Gastrocnemius medialis (tissue), 4 donors: ENCODE measurements at regions of chr4 and their contacts with region 1.

Region 1: GRCh38 chr4:139015269-139015947 is at the start of gene NOCT:
- DNase-seq: peak; percentile 82 to 90
- ATAC-seq: peak; percentile 90 to 92
- H3K4me3 ChIP-seq: peak within 1 kb of the TSS; percentile 61 to 83 (median 70)
- H3K27ac ChIP-seq: peak within 1 kb of the TSS; percentile 87 to 95 (median 93)
- H3K4me1 ChIP-seq: peaks cover 34 to 39% of the 10 kb centered on the region in 2 donors
- H3K27me3 ChIP-seq: no peaks in the 10 kb centered on the region
- CTCF ChIP-seq: peak in 2 of 5 experiments; percentile 40 to 53
- POLR2A ChIP-seq: peak; percentile 87 to 97
- total RNA-seq, gene NOCT: 4.8 to 18.5 (median 9.2) TPM

Region 2: GRCh38 chr4:138897811-138898226 is 117.6 kb before region 1 on chr4:
- in situ Hi-C with region 1: no loop called
- intact Hi-C with region 1: loop called (anchors 10 kb)
- DNase-seq: peak in 1 of 2 donors; percentile 5
- ATAC-seq: peak; percentile 97 to 99
- H3K4me3 ChIP-seq: peak overlapping the region in 2 of 4 donors; percentile 3 to 21
- H3K27ac ChIP-seq: peak overlapping the region; percentile 69 to 85 (median 76)
- H3K4me1 ChIP-seq: peaks cover 12 to 19% of the 10 kb centered on the region in 2 donors
- H3K27me3 ChIP-seq: no peaks in the 10 kb centered on the region
- CTCF ChIP-seq: no peak
- POLR2A ChIP-seq: no peak

Region 3: GRCh38 chr4:138981930-138982390 is 33.4 kb before region 1 on chr4:
- in situ Hi-C with region 1: no loop called
- intact Hi-C with region 1: loop called (anchors 2 kb)
- DNase-seq: peak; percentile 31 to 44
- ATAC-seq: peak; percentile 95 to 96
- H3K4me3 ChIP-seq: no peak overlapping the region
- H3K27ac ChIP-seq: peak overlapping the region; percentile 46 to 65 (median 64)
- H3K4me1 ChIP-seq: peaks cover 3 to 7% of the 10 kb centered on the region in 2 donors
- H3K27me3 ChIP-seq: no peaks in the 10 kb centered on the region
- CTCF ChIP-seq: peak in 2 of 5 experiments; percentile 19 to 28
- POLR2A ChIP-seq: no peak

Region 4: DNA sequence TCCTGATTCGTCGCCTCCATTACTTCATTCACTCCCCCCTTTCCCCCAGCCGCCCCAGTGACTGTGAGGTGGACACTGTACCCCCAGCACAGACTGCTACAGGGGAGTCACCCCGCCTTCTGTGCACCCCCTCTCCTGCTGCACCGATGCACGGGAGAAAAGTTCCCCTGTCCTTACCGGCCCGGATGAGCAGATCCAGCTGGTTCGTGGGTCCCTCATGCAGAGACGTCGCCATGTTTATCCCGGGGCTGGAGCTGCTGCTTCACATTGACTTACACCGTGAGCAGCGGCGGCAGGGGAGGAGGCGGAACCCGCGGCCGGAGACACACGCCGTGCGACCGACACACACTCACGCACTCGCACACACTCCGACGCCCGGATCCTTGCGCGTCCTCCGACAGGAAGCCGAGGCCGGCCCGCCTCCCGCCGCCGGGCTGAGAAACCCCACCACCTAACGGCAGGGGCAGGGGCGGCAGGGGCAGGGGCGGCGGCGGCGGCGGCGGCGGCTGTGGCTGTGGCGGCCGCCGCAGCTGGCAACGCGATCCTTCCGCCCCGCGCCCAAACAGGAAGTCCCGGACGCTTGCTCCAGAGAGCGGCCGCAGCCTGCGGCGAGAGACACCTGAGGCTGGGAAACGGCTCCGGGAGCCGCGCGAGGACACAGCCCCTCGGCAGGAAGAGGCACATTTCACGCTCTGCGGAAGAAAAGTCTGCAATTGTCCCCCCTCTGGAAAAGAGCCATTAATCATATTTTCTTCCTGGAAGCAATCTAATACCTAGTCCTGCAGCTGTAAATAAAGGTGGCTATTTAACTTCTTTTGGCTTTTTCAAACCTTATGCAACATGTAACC is 68.8 kb after region 1 on chr4:
- in situ Hi-C with region 1: no loop called
- intact Hi-C with region 1: loop called (anchors 1 kb)
- DNase-seq: peak; percentile 81 to 91
- ATAC-seq: peak; percentile 66 to 69
- H3K4me3 ChIP-seq: peak overlapping the region; percentile 65 to 90 (median 70)
- H3K27ac ChIP-seq: peak overlapping the region; percentile 92 to 98 (median 92)
- H3K4me1 ChIP-seq: peaks cover 38 to 41% of the 10 kb centered on the region in 2 donors
- H3K27me3 ChIP-seq: no peaks in the 10 kb centered on the region
- CTCF ChIP-seq: peak in 4 of 5 experiments; percentile 23 to 56 (median 48)
- POLR2A ChIP-seq: peak; percentile 37 to 58

Region 5: DNA sequence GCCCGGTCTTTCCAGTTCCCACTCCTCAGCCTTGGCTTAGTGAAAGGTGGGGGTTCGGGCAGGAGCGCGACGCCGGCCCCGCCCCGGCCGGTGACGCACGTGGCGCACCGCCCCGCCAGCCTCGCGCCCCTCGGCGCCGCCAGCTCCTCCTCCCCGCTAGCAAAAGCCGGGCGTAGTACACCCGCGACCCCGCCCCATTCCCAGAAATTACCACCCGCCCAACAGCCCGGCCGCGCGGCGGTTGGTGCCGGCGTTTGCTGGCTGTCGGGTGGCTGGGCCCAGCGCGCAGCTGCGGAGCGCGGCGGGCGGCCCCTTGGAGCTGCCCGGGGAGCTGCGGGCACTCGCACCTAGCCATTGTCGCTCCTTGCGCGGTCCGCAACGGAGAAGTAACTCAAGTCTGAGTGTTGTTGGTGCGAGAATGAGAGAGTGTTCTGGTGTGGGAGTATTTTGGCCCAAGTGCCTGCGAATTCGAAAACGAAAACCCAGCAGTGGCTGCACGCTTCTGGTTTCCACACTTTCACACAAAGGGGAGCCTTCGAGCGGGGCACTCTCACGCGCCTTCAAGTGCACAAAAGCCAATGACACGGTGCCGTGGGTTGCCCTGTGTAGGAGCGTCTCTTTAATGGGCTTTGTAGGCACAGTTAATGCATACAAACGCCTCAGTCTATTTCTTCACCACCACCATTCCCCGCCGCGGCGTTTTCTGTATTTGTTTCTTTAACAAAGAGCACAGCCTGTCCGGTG is 162.6 kb after region 1 on chr4:
- in situ Hi-C with region 1: no loop called
- intact Hi-C with region 1: loop called (anchors 1 kb)
- DNase-seq: peak; percentile 93 to 95
- ATAC-seq: peak; percentile 70 to 71
- H3K4me3 ChIP-seq: peak overlapping the region; percentile 81 to 96 (median 88)
- H3K27ac ChIP-seq: peak overlapping the region; percentile 98 to 100 (median 100)
- H3K4me1 ChIP-seq: peaks cover 13 to 28% of the 10 kb centered on the region in 2 donors
- H3K27me3 ChIP-seq: no peaks in the 10 kb centered on the region
- CTCF ChIP-seq: no peak
- POLR2A ChIP-seq: peak; percentile 89 to 93